ENCODE measurements at regions of chr3 and their contacts with region 1.

Region 1: DNA sequence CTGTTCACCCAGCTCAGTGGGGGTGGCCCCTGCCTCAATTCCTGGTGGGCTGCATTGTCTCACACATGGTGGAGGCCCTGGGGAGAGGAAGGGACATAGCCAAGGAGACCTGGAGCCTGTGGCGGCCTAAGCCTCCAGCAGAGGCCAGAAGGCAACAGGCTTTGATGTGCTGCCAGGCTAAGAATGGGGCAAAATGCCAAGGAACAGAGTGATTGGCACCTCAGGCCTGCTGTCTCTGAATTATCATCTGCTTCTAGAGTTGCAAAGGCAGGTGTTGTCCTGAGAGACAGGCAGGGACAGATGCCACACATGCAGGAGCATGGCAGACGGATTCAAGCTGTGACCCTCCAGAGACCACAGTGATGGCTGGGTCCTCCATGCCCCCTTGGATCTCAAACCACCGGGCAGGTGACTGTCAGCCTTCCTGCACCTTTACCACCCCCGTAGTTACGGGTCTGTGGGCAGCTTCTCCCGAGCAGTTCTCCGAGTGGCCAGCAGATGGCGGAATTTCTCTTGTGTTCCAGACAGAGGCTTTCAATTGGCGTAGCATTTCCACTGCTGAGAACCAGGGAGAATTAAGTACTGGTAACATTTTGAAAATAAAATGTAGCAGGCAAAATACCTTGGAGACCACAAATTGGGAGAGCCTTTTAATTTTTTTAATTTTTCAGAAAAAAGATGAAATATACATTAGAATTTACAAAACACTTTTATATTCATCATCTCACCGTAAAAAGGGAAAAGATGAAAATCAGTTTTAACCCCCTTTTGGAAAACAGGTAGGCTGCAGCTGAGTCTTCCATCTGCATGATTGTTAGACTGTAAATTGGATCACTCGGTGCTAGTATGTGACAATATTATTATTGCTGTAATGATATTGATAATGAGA is 525.5 kb upstream of the CFAP20DC start:
- DNase-seq: peak; percentile 77 to 83
- H3K4me3 ChIP-seq: no peak overlapping the region
- H3K27ac ChIP-seq: no peak overlapping the region
- H3K4me1 ChIP-seq: peaks cover 3 to 4% of the 10 kb centered on the region in 2 donors
- H3K27me3 ChIP-seq: no peaks in the 10 kb centered on the region
- CTCF ChIP-seq: peak; percentile 76 to 94 (median 86)
- POLR2A ChIP-seq: no peak

Region 2: GRCh38 chr3:59857589-59858346 is 282.4 kb after region 1 on chr3:
- intact Hi-C with region 1: loop called (anchors 10 kb)
- DNase-seq: peak; percentile 68 to 79
- H3K4me3 ChIP-seq: no peak overlapping the region
- H3K27ac ChIP-seq: no peak overlapping the region
- H3K4me1 ChIP-seq: no peaks in the 10 kb centered on the region
- H3K27me3 ChIP-seq: no peaks in the 10 kb centered on the region
- CTCF ChIP-seq: peak; percentile 71 to 84 (median 81)
- POLR2A ChIP-seq: no peak